Posterior vena cava (tissue), 2 donors: ENCODE measurements at regions of chr3 and their contacts with region 1.

Region 1: DNA sequence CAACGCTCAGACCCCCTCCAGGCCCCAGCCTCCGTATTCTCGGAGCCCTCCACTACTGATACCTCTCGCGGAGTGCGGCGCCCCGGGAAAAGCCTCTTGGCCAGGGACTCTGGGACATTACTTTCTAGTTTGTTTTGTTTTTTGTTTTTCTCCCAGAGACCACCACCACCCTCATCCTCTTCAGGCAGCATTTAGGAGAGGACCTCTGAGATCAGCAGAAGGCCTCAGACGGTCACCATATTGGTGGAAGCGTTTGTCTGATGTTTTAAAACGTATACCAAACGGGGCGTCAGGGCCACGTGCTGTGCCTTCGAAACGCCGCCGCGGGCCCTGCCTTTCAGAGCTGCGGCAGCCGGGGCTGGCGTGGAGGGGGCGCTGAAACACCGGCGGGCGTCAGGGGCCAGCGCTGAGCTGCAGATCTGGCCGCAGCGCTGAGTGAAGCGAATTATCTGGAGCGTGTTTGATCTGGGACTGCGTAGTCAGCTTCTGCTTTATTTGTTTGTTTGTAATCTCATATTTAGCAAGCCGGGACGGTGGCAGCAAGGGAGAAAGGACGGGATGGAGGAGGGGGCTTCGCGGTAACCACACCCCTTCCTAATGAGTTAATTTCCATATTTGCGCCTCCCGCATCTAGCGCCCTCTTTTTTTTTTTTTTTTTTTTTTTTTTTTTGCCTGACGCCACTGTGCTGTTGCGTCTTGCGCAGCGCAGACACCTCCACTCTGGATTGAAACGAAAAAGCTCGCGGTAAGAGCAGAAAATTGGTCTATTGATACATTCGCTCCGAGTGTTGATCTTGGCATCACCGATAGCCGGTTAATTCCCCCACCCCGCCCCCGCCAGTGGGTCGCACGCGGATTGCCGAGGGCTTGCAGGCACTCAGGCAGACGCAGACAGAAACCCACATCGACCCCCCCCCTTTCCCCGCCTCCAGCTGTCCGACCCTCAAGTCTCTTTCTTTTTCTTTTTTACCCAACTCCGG is 14.9 kb downstream of the SOX2 start:
- DNase-seq: peak; percentile 70

Region 2: GRCh38 chr3:182683453-182683852 is 956.8 kb after region 1 on chr3:
- intact Hi-C with region 1: loop called in 1 of 2 experiments (anchors 10 kb)
- DNase-seq: no peak